GM12878 (cell line): ENCODE measurements at regions of chr17 and their contacts with region 1.

Region 1: GRCh38 chr17:36601303-36602029 is at the start of gene MRM1:
- DNase-seq: peak; percentile 77
- ATAC-seq: peak; percentile 92
- H3K4me3 ChIP-seq: peak within 1 kb of the TSS; percentile 89
- H3K27ac ChIP-seq: peak within 1 kb of the TSS; percentile 90
- H3K4me1 ChIP-seq: peaks cover 13% of the 10 kb centered on the region
- H3K27me3 ChIP-seq: no peaks in the 10 kb centered on the region
- CTCF ChIP-seq: peak in 1 of 3 experiments; percentile 28; a peak in 4 of 6 replicates
- EP300 ChIP-seq: peak in 1 of 2 experiments; percentile 25; a peak in 1 of 4 replicates
- POLR2A ChIP-seq: peak; percentile 96
- RAD21 ChIP-seq: no peak
- polyA plus RNA-seq, gene MRM1: 0.23 to 1.7 TPM

Region 2: DNA sequence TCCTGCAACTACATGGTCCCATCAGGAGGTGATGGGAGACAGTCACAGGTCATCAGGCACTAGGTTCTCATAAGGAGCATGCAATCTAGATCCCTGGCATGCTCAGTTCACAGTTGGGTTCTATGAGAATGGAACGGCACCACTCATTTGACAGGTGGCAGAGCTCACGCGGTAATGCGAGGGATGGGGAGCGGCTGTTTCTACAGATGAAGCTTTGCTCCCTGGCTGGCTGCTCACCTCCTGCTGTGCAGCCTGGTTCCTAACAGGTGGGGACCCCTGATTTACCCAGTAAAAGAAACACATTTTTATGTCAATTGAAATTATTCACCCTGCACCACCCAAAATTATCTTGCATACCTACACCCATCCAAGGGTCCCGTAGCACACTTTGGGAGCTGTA is 157.7 kb before region 1 on chr17:
- CTCF ChIA-PET with region 1: no interaction called
- POLR2A ChIA-PET with region 1: no interaction called
- RAD21 ChIA-PET with region 1: no interaction called
- SMC1A ChIA-PET with region 1: no interaction called
- in situ Hi-C with region 1: no loop called
- intact Hi-C with region 1: no loop called
- DNase-seq: no peak
- ATAC-seq: no peak
- H3K4me3 ChIP-seq: no peak overlapping the region
- H3K27ac ChIP-seq: no peak overlapping the region
- H3K4me1 ChIP-seq: no peaks in the 10 kb centered on the region
- H3K27me3 ChIP-seq: no peaks in the 10 kb centered on the region
- CTCF ChIP-seq: no peak
- EP300 ChIP-seq: no peak
- POLR2A ChIP-seq: no peak
- RAD21 ChIP-seq: no peak

Region 3: GRCh38 chr17:36534840-36535668 is 66.4 kb before region 1 on chr17 and contains the starts of genes MYO19 and PIGW:
- CTCF ChIA-PET with region 1: interaction called, 12 read pairs
- POLR2A ChIA-PET with region 1: interaction called, 6 read pairs
- RAD21 ChIA-PET with region 1: interaction called, 28 read pairs
- SMC1A ChIA-PET with region 1: interaction called, 23 read pairs
- in situ Hi-C with region 1: no loop called
- intact Hi-C with region 1: no loop called
- DNase-seq: peak; percentile 66
- ATAC-seq: peak; percentile 91
- H3K4me3 ChIP-seq: peak within 1 kb of the TSS; percentile 81
- H3K27ac ChIP-seq: peak within 1 kb of the TSS; percentile 98
- H3K4me1 ChIP-seq: peaks cover 9% of the 10 kb centered on the region
- H3K27me3 ChIP-seq: no peaks in the 10 kb centered on the region
- CTCF ChIP-seq: peak in 1 of 3 experiments; percentile 22; a peak in 3 of 6 replicates
- EP300 ChIP-seq: no peak
- POLR2A ChIP-seq: peak; percentile 94
- RAD21 ChIP-seq: no peak
- polyA plus RNA-seq, gene MYO19: 11.4 to 12.2 TPM
- polyA plus RNA-seq, gene PIGW: 6.0 to 9.5 TPM

Region 4: DNA sequence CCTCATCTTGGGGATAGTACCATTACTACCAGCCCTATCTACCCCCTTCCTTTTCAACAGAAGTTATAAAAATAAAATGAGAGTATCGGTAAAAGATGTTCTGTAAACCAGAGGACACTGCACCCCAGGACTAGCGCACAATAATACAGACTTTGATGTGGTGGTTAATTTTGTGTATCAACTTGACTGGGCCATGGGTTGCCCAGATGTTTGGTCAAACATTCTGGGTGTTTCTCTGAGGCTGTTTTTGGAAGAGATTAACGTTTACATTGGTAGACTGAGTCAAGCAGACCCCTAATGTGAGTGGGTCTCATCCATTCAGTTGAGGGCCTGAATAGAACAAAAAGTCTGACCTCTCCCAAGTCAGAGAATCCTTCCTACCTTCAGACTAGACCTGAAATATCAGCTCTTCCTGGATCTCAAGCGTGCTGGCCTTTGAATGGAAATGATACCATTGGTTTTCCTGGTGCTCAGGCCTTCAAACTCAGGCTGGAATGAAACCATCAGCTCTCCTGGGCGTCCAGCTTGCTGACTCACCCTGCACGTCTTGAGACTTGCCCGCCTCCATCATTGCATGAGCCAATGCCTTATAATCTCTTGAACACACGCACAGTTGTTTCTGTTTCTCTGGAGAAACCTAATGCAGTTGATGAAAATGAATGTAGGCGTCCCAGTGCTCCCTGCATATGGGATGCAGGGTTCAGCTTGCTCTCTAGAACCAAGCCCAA is 10.0 kb after region 1 on chr17:
- CTCF ChIA-PET with region 1: interaction called, 15 read pairs
- POLR2A ChIA-PET with region 1: no interaction called
- RAD21 ChIA-PET with region 1: interaction called, 5 read pairs
- SMC1A ChIA-PET with region 1: interaction called, 7 read pairs
- in situ Hi-C with region 1: no loop called
- intact Hi-C with region 1: no loop called
- DNase-seq: no peak
- ATAC-seq: no peak
- H3K4me3 ChIP-seq: no peak overlapping the region
- H3K27ac ChIP-seq: no peak overlapping the region
- H3K4me1 ChIP-seq: no peaks in the 10 kb centered on the region
- H3K27me3 ChIP-seq: no peaks in the 10 kb centered on the region
- CTCF ChIP-seq: no peak
- EP300 ChIP-seq: no peak
- POLR2A ChIP-seq: no peak
- RAD21 ChIP-seq: no peak

Region 5: GRCh38 chr17:36629252-36629847 is 27.9 kb after region 1 on chr17:
- CTCF ChIA-PET with region 1: interaction called, 91 read pairs
- POLR2A ChIA-PET with region 1: no interaction called
- RAD21 ChIA-PET with region 1: interaction called, 8 read pairs
- SMC1A ChIA-PET with region 1: interaction called, 23 read pairs
- in situ Hi-C with region 1: no loop called
- intact Hi-C with region 1: no loop called
- DNase-seq: peak; percentile 12
- ATAC-seq: peak; percentile 99
- H3K4me3 ChIP-seq: no peak overlapping the region
- H3K27ac ChIP-seq: no peak overlapping the region
- H3K4me1 ChIP-seq: no peaks in the 10 kb centered on the region
- H3K27me3 ChIP-seq: peaks cover 0 to 2% of the 10 kb centered on the region in 2 experiments; a peak in 2 of 4 replicates
- CTCF ChIP-seq: peak; percentile 98 to 99 (median 98); a peak in 5 of 6 replicates
- EP300 ChIP-seq: no peak
- POLR2A ChIP-seq: no peak
- RAD21 ChIP-seq: peak; percentile 92

Region 6: DNA sequence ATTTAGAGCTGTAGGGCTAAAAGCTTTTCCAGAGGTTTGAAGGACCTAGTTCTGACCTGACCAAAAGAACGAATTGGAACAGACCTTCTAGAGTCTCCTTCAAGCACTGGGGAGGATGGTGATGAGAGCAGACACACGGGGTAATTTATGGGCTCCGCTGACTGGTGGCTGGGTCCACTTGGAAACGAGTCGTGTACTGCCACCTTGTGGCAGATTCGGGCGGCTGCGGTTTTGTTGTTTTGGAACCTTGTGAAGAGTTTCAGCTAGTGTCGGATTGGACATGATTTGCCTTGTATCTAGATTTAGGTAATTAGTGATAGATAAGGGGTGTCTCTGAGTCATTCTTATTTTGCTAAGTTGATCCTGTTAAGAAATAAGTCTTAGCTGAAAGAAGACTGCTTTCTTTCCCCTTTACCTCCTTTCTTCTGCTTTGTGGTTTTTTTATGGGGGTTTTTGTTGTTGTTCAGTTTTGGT is 446.2 kb after region 1 on chr17:
- CTCF ChIA-PET with region 1: interaction called, 63 read pairs
- POLR2A ChIA-PET with region 1: interaction called, 5 read pairs
- RAD21 ChIA-PET with region 1: interaction called, 34 read pairs
- SMC1A ChIA-PET with region 1: interaction called, 29 read pairs
- in situ Hi-C with region 1: loop called (anchors 25 kb)
- intact Hi-C with region 1: no loop called
- DNase-seq: peak; percentile 17
- ATAC-seq: peak; percentile 95
- H3K4me3 ChIP-seq: no peak overlapping the region
- H3K27ac ChIP-seq: no peak overlapping the region
- H3K4me1 ChIP-seq: no peaks in the 10 kb centered on the region
- H3K27me3 ChIP-seq: no peaks in the 10 kb centered on the region
- CTCF ChIP-seq: peak; percentile 83 to 88 (median 85)
- EP300 ChIP-seq: no peak
- POLR2A ChIP-seq: no peak
- RAD21 ChIP-seq: peak; percentile 79

Region 7: DNA sequence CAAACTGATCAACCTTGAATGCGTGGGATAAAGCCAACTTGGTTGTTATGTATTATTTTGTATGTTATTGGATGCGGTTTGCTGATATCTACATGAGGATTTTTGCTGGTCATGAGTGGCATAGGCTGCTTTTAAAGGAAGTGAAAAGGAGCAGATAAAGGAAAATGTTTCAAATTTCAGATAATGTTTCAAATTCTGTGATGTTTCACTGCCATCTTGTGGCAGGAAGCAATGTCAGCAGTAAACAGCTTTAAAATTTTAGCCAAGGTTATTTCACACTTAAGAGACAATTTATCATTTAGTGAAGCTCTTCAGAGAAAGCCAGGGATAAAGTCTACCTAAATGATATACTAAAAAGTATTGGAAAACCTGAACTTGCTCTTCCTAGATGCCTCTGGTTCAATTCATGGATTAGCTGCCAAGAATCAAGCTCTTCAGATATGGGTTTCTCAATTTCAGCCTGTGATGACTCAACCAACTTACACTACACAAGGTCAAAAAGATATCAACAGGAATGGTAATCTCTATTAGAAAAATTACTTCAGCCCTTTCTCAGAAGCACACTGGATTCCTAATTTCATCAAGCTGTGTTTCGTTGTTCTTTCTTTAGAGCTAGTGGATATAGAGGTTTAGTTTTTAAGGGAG is 638.3 kb after region 1 on chr17:
- CTCF ChIA-PET with region 1: interaction called, 45 read pairs
- POLR2A ChIA-PET with region 1: no interaction called
- RAD21 ChIA-PET with region 1: interaction called, 13 read pairs
- SMC1A ChIA-PET with region 1: interaction called, 15 read pairs
- in situ Hi-C with region 1: loop called (anchors 25 kb)
- intact Hi-C with region 1: no loop called
- DNase-seq: no peak
- ATAC-seq: no peak
- H3K4me3 ChIP-seq: no peak overlapping the region
- H3K27ac ChIP-seq: no peak overlapping the region
- H3K4me1 ChIP-seq: no peaks in the 10 kb centered on the region
- H3K27me3 ChIP-seq: no peaks in the 10 kb centered on the region
- CTCF ChIP-seq: peak; percentile 43 to 67 (median 60); a peak in 5 of 6 replicates
- EP300 ChIP-seq: no peak
- POLR2A ChIP-seq: no peak
- RAD21 ChIP-seq: peak; percentile 53